ENCODE measurements at regions of chr2 and their contacts with region 1.

Region 1: GRCh38 chr2:85302121-85302520 is 25.7 kb downstream of the TGOLN2 start:
- DNase-seq: no peak
- H3K4me3 ChIP-seq: no peak overlapping the region
- H3K27ac ChIP-seq: no peak overlapping the region
- H3K4me1 ChIP-seq: peaks cover 18% of the 10 kb centered on the region
- H3K27me3 ChIP-seq: no peaks in the 10 kb centered on the region
- CTCF ChIP-seq: no peak

Region 2: GRCh38 chr2:85066874-85067351 is 235.2 kb before region 1 on chr2:
- intact Hi-C with region 1: loop called (anchors 5 kb)
- DNase-seq: peak; percentile 75
- H3K4me3 ChIP-seq: peak overlapping the region; percentile 60
- H3K27ac ChIP-seq: peak overlapping the region; percentile 55
- H3K4me1 ChIP-seq: peaks cover 9% of the 10 kb centered on the region
- H3K27me3 ChIP-seq: peaks cover 10% of the 10 kb centered on the region
- CTCF ChIP-seq: peak; percentile 92